Aorta (tissue), 5 donors: ENCODE measurements at regions of chr4 and their contacts with region 1.

Region 1: GRCh38 chr4:56435306-56435926 is at the start of gene PPAT:
- DNase-seq: peak; percentile 99
- ATAC-seq: peak; percentile 98
- H3K4me3 ChIP-seq: peak within 1 kb of the TSS; percentile 47 to 55
- H3K27ac ChIP-seq: peak within 1 kb of the TSS; percentile 45 to 87
- H3K4me1 ChIP-seq: no peaks in the 10 kb centered on the region
- H3K27me3 ChIP-seq: no peaks in the 10 kb centered on the region
- total RNA-seq, gene PPAT: 4.4 to 4.8 TPM

Region 2: DNA sequence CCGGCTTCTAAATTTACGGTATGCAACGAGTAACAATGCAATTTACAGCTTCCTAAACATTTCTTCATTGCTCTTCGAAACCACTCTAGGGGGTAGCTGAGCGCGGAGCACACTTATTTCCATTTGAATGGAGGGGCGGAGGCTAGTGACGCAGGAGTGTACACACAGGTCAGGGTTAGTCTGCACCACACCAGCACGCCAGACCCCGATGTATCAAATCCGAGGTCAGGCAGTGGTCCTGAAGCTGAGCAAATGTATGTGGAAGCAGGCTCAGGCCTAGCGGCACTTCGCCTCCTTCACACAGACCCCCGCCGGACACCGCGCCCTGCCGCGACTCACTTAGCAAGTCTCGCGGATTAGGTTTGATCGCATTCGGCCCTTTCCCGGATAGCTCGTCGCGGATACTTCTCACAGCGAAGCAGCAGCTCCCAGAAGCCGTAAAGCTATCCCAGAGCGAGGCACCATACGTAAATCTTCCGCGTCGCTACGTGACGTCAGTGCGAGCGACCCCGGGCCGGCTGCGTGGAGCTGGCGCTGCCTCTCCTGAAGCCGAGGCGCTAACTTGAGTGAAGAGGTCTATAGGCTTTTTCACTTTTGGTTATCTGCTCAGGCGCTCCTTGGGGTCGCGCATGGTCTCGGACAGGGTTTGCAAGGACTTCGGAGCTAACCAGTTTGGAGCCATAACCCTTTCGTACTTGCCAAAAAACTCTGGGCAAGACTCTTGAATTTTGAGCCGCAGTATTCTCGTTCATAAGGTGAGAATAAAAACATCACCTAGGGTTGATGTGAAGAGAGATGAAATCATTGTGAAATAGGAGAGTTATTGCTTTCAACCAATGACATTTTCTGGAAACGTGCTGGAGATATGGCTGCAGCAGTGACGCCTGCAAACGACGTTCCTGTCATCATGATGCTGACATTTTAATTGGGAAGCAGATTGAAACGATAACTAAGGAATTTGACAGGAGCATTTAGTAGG is 48.1 kb before region 1 on chr4 and contains the start of gene AASDH:
- intact Hi-C with region 1: loop called in 1 of 2 experiments (anchors 2 kb)
- DNase-seq: peak; percentile 95 to 97
- ATAC-seq: peak; percentile 99
- H3K4me3 ChIP-seq: peak within 1 kb of the TSS; percentile 58 to 81
- H3K27ac ChIP-seq: peak within 1 kb of the TSS; percentile 91 to 94
- H3K4me1 ChIP-seq: no peaks in the 10 kb centered on the region
- H3K27me3 ChIP-seq: no peaks in the 10 kb centered on the region
- total RNA-seq, gene AASDH: 7.1 to 12.2 TPM

Region 3: GRCh38 chr4:56410235-56411062 is 25.0 kb before region 1 on chr4:
- intact Hi-C with region 1: loop called in 1 of 2 experiments (anchors 2 kb)
- DNase-seq: no peak
- ATAC-seq: peak; percentile 95
- H3K4me3 ChIP-seq: peak overlapping the region in 1 of 2 donors; percentile 72
- H3K27ac ChIP-seq: no peak overlapping the region
- H3K4me1 ChIP-seq: no peaks in the 10 kb centered on the region
- H3K27me3 ChIP-seq: no peaks in the 10 kb centered on the region

Region 4: DNA sequence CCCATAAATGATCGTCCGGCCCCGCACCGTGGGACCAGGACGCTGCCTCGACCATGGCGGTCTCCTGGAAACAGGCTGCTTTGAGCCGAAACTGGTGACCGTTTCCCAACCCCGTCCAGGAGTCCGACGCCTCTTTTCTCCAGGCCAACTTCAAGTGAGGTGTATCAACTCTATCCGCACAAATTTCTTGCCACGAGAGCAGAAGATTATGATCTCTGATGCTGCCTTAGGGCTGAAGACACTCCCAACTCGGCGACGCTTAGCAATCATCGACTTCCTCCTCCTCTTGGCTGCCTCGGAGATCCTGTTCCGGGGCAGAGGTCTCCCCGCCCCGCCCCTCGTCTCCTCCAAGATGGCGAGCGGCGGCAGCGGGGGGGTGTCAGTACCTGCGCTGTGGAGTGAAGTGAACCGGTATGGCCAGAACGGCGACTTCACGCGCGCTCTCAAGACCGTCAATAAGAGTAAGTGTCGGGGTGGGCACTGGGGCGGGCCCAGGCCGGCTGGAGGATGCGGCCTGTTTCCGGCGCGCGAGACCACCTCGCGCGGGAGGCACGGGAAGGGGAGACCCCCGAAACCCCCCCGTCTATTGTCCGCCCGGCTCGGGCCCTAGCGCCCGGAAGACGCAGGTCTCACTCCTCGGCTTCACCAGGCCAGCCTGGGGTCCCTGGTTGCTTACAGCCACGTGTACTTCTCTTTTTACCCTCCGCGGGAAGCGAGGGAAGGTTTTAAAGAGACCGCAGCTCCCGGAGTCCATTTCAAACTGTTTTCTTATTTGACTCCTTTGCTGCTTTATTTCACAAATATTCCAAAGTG is 32.1 kb after region 1 on chr4 and contains the start of gene SRP72:
- intact Hi-C with region 1: loop called in 1 of 2 experiments (anchors 2 kb)
- DNase-seq: peak; percentile 92 to 95
- ATAC-seq: peak; percentile 97
- H3K4me3 ChIP-seq: peak within 1 kb of the TSS; percentile 91 to 96
- H3K27ac ChIP-seq: peak within 1 kb of the TSS; percentile 9 to 50
- H3K4me1 ChIP-seq: peaks cover 0 to 4% of the 10 kb centered on the region in 2 donors
- H3K27me3 ChIP-seq: no peaks in the 10 kb centered on the region
- total RNA-seq, gene SRP72: 84.6 to 88.1 TPM